Right cardiac atrium (tissue), 5 donors: ENCODE measurements at regions of chr15 and their contacts with region 1.

Region 1: DNA sequence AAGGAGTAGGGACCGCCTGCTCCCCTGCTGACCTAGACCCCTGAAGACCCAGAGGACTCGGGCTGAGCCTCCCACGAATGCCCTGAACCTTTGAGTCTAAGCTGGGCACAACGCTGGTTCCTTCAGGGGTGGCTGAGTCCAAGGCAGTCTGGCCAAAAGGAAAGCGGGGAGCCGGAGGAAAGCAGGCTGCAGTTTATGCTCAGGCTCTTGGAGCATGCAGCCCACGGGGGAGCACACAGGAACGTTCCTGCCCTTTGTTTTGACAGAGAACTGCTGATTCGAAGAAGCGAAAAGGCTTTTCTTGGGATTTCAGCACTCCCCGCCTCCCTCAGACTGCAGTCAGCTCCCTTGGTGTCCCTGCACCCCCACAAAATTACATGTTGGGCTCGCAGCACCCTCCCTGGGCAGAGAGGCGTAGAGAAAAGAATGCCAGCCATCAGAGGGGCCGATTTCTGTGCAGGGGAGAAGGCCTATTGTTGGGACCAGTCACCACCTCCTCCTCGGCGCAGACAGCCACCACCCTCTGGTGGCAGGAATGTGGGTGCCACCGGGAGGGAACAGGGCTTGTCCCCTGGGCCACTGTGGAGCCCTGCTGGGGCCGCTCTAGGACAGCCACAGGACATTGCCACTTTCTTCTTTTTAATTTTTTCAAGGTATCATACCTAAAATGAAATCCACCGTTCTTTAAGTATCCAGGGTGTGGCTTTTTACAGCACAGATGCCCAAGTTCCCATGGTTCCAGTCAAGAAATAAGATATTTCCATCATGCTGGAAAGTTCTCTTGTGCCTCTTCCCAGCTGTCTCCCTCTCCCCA is 72.2 kb downstream of the SMAD6 start:
- DNase-seq: peak; percentile 82 to 94 (median 94)
- ATAC-seq: peak; percentile 82 to 89
- H3K4me3 ChIP-seq: no peak overlapping the region
- H3K27ac ChIP-seq: peak overlapping the region; percentile 34
- H3K4me1 ChIP-seq: peaks cover 52% of the 10 kb centered on the region
- H3K27me3 ChIP-seq: no peaks in the 10 kb centered on the region

Region 2: GRCh38 chr15:66603301-66604179 is 170.7 kb before region 1 on chr15:
- intact Hi-C with region 1: loop called in 3 of 4 experiments (anchors 5 to 10 kb)
- DNase-seq: peak; percentile 75 to 93 (median 90)
- ATAC-seq: peak; percentile 89 to 90
- H3K4me3 ChIP-seq: no peak overlapping the region
- H3K27ac ChIP-seq: no peak overlapping the region
- H3K4me1 ChIP-seq: no peaks in the 10 kb centered on the region
- H3K27me3 ChIP-seq: no peaks in the 10 kb centered on the region

Region 3: DNA sequence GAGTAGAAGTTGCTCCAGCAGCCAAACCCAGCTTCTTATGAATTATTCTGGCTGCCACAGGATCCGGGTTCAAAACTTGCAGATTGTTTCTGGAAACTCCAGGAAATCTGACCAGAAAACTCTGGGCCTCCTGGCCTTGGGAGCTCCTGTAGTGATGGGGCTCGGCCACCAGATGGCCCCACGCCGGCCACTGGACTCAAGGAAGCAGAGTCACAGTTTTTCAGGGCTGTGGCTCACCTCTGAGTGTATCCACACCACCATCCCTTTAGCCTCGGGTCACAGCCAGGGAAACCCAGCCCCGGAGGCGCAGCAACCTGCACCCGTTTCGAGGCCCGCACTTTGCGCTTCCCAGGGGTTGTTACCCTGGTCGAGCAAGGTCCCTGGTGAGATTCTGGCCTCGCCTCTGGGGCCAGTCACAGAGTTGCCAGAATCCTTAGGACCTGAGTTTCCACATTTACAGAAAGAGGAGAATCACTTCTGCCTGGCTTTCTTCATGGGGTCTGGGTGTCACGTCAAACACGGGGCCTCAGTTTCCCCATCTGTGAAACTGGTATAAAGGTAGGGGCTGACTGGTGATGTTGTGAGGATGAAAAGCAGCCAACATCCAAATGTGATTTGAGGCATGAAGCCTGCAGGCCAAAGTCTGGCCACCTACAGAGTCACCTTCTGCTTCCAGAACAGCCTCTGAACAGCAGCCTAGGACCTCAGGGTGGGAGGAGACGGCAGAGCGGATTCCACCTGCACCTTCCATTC is 154.9 kb before region 1 on chr15:
- intact Hi-C with region 1: loop called in 1 of 4 experiments (anchors 5 kb)
- DNase-seq: peak; percentile 79 to 93 (median 93)
- ATAC-seq: peak; percentile 53
- H3K4me3 ChIP-seq: no peak overlapping the region
- H3K27ac ChIP-seq: peak overlapping the region; percentile 69
- H3K4me1 ChIP-seq: peaks cover 8% of the 10 kb centered on the region
- H3K27me3 ChIP-seq: no peaks in the 10 kb centered on the region

Region 4: DNA sequence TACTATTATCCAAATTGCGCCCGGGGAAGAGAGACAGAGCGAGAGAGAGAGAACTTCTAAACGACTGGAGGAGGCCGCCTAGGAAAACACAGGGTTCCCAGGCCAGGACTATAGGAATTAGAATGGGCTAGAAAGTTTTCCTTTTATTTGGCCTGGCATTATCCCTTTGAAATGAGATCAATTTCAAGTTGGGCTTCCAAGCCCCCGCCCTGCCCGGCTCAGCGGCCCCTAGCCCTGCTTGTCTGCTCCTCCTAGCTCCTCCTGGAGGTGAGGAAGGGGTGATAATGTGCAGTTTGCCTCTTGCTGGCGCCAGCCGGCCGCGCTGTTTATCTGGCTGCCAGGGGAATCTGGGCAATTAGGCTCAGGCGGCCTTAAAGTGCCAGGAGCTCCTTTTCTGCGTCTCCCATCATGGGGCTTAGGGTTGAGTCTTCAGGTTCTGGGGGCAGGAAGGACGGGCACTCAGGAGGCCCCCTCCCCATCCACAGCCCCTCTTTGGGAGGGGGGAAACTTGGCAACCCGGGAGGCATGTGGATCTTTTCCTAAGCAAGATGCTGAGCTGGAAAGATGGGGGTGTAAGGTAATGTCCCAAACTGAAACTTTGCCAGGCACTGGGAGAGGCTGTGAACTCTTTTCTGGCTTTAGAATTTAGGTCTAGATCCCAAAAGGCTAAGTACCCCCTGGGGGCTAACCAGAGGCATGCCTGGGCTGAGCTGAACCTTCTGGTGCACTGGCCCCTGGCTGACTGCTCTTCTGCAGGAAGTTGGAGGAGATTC is 66.7 kb before region 1 on chr15:
- intact Hi-C with region 1: loop called in 3 of 4 experiments (anchors 5 kb)
- DNase-seq: peak; percentile 53 to 86 (median 82)
- ATAC-seq: peak; percentile 27 to 42
- H3K4me3 ChIP-seq: peak overlapping the region; percentile 95
- H3K27ac ChIP-seq: peak overlapping the region; percentile 77
- H3K4me1 ChIP-seq: peaks cover 18% of the 10 kb centered on the region
- H3K27me3 ChIP-seq: no peaks in the 10 kb centered on the region

Region 5: GRCh38 chr15:66841953-66842681 is 67.9 kb after region 1 on chr15:
- intact Hi-C with region 1: loop called in 1 of 4 experiments (anchors 10 kb)
- DNase-seq: peak; percentile 93 to 96 (median 96)
- ATAC-seq: peak; percentile 90 to 93
- H3K4me3 ChIP-seq: peak overlapping the region; percentile 59
- H3K27ac ChIP-seq: peak overlapping the region; percentile 94
- H3K4me1 ChIP-seq: peaks cover 7% of the 10 kb centered on the region
- H3K27me3 ChIP-seq: no peaks in the 10 kb centered on the region